ENCODE measurements at regions of chr10 and their contacts with region 1.

Region 1: DNA sequence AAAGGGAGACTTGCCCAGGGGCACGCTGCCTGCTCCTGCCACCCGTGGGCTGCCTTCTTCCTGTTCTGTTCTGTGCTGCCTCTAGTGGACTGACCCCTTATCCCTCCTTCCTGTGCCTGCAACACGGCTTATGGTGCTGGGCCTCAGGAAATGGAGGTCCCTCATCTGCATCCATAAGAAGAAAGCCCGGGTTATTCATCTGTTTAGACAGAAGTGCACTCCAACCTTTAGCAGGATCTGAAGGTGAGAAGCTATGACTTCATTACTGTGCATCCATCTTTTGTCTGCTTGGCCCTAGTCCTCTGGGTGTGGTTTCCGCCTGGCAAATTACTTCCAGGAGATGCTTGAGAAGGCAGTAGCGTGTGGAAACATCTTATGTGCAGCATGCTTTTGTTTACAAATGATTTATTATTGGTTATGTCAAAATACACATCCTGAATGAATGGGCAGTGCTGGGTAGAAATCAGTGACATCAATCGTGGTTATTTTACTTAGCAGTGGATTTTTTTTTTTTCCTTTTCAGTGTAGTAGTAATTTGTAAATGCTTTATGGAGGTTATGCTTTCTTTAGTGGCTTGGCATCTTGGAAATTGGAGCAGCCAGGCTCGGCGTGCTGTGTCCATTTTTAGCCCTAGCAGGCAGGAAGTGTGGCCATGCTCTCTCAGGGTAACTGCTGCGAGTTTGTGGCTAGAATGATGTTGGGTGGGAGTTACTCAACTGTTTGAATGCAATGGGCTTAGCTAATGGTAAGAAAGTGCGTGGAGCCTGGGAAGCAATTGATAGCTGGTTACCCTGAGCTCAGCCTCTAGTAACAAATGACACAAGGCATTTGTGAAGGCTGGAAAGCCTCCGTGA is 12.7 kb downstream of the PTPRE start:
- DNase-seq: peak; percentile 83
- H3K4me3 ChIP-seq: no peak overlapping the region
- H3K27ac ChIP-seq: peak overlapping the region; percentile 31
- H3K4me1 ChIP-seq: peaks cover 53% of the 10 kb centered on the region
- H3K27me3 ChIP-seq: no peaks in the 10 kb centered on the region
- CTCF ChIP-seq: peak; percentile 57 to 61
- POLR2A ChIP-seq: no peak

Region 2: DNA sequence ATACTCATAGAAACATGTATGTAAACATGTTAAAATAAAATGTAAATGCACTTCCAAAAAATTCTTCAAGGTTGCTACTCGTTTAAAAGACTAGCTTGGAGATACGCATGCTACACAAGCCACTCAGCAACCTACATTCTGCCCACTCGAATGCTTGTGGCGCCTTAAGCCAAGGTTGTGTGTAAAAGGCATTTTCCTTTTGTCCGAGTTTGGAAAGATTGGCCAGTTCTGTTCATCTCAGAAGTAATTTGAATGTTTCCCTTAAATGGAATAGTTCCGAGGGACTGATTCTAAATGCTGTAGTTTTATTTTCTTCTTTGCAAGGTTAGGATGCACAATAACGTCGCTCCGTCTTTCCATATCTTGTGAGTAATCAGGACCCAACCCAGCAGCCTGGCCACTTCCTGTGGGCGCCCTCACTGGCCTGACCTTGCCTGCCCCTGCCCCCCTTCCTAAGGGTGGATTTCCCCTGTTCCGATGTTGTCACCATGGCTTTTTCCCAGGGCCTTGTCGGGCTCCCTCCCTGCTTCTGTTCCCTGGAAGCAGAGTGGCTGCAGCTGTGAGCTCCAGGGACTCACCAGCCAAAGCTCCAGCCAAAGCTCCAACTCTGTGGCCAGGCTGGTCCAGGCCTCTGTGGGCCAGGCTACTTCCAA is 57.8 kb after region 1 on chr10:
- CTCF ChIA-PET with region 1: no interaction called
- POLR2A ChIA-PET with region 1: interaction called, 3 read pairs
- dilution Hi-C with region 1: no loop called
- intact Hi-C with region 1: loop called (anchors 1 kb)
- DNase-seq: peak; percentile 96
- H3K4me3 ChIP-seq: peak overlapping the region in 1 of 3 experiments; percentile 20
- H3K27ac ChIP-seq: peak overlapping the region; percentile 79
- H3K4me1 ChIP-seq: peaks cover 42% of the 10 kb centered on the region
- H3K27me3 ChIP-seq: no peaks in the 10 kb centered on the region
- CTCF ChIP-seq: no peak
- POLR2A ChIP-seq: peak; percentile 54

Measured in endothelial cell of umbilical vein (primary cell).